ENCODE measurements at regions of chr13 and their contacts with region 1.

Region 1: GRCh38 chr13:89457977-89458376 is 1786.8 kb downstream of the SLITRK5 start:
- DNase-seq: no peak
- ATAC-seq: no peak
- H3K4me3 ChIP-seq: no peak overlapping the region
- H3K27ac ChIP-seq: no peak overlapping the region
- H3K4me1 ChIP-seq: no peaks in the 10 kb centered on the region
- H3K27me3 ChIP-seq: no peaks in the 10 kb centered on the region
- CTCF ChIP-seq: no peak

Region 2: GRCh38 chr13:89514534-89515312 is 56.7 kb after region 1 on chr13:
- intact Hi-C with region 1: loop called in 1 of 10 experiments (anchors 10 kb)
- DNase-seq: peak in 1 of 2 donors; percentile 8
- ATAC-seq: peak; percentile 33 to 97 (median 86)
- H3K4me3 ChIP-seq: no peak overlapping the region
- H3K27ac ChIP-seq: peak overlapping the region in 9 of 10 donors; percentile 11 to 72 (median 51)
- H3K4me1 ChIP-seq: peaks cover 0 to 16% (median 0%) of the 10 kb centered on the region in 9 donors
- H3K27me3 ChIP-seq: no peaks in the 10 kb centered on the region
- CTCF ChIP-seq: no peak

Region 3: GRCh38 chr13:89688918-89689317 is 230.9 kb after region 1 on chr13:
- intact Hi-C with region 1: no loop called
- DNase-seq: peak; percentile 12 to 28
- ATAC-seq: peak in 6 of 8 donors; percentile 53 to 86 (median 67)
- H3K4me3 ChIP-seq: no peak overlapping the region
- H3K27ac ChIP-seq: no peak overlapping the region
- H3K4me1 ChIP-seq: peaks cover 0 to 5% (median 0%) of the 10 kb centered on the region in 9 donors
- H3K27me3 ChIP-seq: no peaks in the 10 kb centered on the region
- CTCF ChIP-seq: no peak